ENCODE measurements at regions of chr2 and their contacts with region 1.

Region 1: GRCh38 chr2:174748948-174749347 is 15.3 kb downstream of the CHRNA1 start:
- DNase-seq: peak; percentile 92
- H3K4me3 Mint-ChIP-seq: no peak overlapping the region
- H3K27ac Mint-ChIP-seq: peak overlapping the region; percentile 49
- H3K4me1 Mint-ChIP-seq: peaks cover 31% of the 10 kb centered on the region
- H3K27me3 Mint-ChIP-seq: peaks cover 16% of the 10 kb centered on the region

Region 2: DNA sequence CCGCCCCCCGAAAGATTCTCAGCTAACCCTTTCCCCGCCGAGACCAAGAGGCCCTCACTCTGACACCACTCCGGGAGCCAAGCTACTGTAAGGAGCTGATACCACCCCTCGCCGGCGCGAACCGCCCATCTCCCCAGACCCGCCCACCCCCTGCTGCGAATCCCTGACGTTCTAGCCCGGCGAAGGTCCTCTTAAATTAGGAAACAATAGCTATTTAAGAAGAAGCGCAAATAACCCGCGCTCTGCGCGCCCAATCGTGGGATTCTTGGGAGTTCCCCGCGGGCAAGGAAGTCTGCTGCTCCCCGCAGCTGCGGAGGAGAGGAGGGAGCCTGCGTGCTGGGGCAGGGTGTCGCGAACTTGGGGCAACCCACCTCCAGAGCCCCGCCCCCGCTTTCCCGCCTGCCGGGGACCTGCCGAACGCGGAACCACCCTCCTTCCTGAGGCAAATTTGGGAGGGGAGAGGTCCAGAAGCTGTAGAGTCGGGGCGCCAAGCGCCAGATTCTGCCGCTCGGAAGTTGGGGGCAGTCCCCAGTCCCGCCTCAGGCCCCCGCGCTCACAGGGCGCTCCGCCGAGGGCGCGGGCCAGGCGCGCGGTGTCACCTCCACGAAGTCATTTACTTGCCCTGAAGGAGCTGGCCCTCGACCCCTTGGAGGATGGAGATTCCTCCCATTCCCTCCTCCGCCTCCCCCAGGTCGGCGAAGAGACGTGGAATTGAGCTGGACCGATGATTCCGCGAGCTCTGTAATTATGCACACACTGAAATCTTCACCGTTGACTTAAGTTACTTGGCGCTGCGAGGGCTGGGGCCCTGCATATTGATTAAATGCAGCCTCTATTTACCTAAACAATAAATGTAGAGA is 422.6 kb before region 1 on chr2:
- intact Hi-C with region 1: no loop called
- DNase-seq: peak; percentile 76
- H3K4me3 Mint-ChIP-seq: peak overlapping the region; percentile 80
- H3K27ac Mint-ChIP-seq: no peak overlapping the region
- H3K4me1 Mint-ChIP-seq: peaks cover 16% of the 10 kb centered on the region
- H3K27me3 Mint-ChIP-seq: peaks cover 86% of the 10 kb centered on the region

Region 3: GRCh38 chr2:174593574-174594203 is 155.3 kb before region 1 on chr2:
- intact Hi-C with region 1: loop called (anchors 2 kb)
- DNase-seq: peak; percentile 92
- H3K4me3 Mint-ChIP-seq: peak overlapping the region; percentile 86
- H3K27ac Mint-ChIP-seq: peak overlapping the region; percentile 98
- H3K4me1 Mint-ChIP-seq: peaks cover 53% of the 10 kb centered on the region
- H3K27me3 Mint-ChIP-seq: no peaks in the 10 kb centered on the region

Region 4: DNA sequence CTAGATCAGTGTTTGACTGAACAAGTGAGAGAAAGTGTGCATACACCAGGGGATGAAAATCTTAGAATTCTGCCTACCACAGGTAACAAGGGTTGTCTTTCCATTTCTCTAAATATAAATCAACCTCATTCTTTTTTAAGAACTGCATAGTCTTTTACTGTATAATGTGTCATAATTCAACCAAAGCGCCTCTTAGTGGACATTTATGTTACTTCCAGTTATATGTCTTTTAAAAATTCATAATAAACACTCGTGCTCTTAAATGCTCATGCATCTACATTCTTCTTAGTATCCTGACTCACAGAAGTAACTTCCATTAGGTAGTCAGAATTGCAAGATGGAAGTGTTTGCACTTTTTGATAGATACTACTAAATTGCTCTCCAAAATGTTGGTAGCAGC is 60.9 kb before region 1 on chr2:
- intact Hi-C with region 1: no loop called
- DNase-seq: no peak
- H3K4me3 Mint-ChIP-seq: no peak overlapping the region
- H3K27ac Mint-ChIP-seq: no peak overlapping the region
- H3K4me1 Mint-ChIP-seq: peaks cover 30% of the 10 kb centered on the region
- H3K27me3 Mint-ChIP-seq: no peaks in the 10 kb centered on the region

Region 5: DNA sequence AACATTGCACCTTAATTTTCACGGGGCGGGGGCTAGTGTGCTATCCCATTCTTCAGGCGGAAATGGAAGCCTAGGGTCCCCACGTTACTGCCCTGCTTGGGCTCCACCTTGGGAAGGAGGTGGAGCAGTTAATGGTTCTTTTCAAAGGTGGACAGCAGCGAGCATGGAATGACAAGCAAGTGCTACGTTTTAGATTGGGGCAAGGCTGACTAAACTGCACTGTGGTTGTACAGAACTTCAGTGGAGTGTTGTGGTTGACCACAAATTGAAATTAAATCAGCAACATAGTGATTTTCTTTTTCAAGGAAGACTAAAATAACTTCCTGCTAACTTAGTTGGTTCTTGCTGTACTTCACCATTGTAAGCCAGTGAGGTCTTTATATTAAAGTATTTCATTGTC is 31.7 kb before region 1 on chr2:
- intact Hi-C with region 1: loop called (anchors 2 kb)
- DNase-seq: peak; percentile 82
- H3K4me3 Mint-ChIP-seq: peak overlapping the region; percentile 63
- H3K27ac Mint-ChIP-seq: peak overlapping the region; percentile 39
- H3K4me1 Mint-ChIP-seq: peaks cover 27% of the 10 kb centered on the region
- H3K27me3 Mint-ChIP-seq: peaks cover 12% of the 10 kb centered on the region

Region 6: DNA sequence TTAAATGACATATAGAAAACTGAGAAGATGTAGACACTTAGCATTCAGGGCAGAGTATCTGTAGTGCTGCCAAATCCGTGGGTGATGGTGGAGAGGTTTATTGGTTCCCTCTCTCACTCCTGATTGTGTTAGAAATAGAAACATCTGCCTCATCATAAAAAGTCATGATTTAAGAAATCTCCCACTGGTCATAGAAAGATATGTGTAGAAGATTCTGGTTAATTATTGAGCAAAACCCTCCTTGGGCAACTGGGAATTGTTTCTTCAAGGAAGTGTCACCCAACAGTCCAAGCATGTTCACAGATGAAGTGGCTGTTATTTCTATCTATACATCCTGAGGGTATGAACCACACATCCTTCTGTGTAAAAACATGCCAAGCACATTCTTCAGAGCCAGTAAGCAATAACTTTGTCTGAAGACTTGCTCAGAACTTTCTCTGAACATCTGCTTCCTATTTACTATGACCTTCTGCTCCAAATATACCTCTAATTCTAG is 48.9 kb after region 1 on chr2:
- intact Hi-C with region 1: loop called (anchors 1 kb)
- DNase-seq: no peak
- H3K4me3 Mint-ChIP-seq: no peak overlapping the region
- H3K27ac Mint-ChIP-seq: no peak overlapping the region
- H3K4me1 Mint-ChIP-seq: peaks cover 19% of the 10 kb centered on the region
- H3K27me3 Mint-ChIP-seq: no peaks in the 10 kb centered on the region

Region 7: DNA sequence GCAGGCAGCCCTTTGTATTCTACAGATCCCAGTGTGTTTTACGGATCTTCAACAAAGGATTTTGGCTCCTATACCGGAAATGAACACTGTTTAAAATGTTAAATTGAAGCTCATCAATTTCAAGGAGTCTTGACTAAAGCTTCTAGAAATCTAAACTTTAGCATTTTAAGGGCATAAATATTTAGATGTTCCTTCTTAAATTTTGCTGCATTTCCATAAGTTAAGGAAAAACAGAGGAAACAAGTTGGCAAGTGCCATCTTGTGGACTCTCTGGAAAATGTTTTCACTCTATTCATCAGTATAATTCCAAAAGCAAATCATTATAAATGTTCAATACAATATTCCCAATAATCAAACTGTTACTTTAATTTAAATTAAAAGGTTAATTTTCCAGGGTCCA is 236.7 kb after region 1 on chr2:
- intact Hi-C with region 1: loop called (anchors 2 kb)
- DNase-seq: no peak
- H3K4me3 Mint-ChIP-seq: no peak overlapping the region
- H3K27ac Mint-ChIP-seq: no peak overlapping the region
- H3K4me1 Mint-ChIP-seq: peaks cover 2% of the 10 kb centered on the region
- H3K27me3 Mint-ChIP-seq: peaks cover 19% of the 10 kb centered on the region

Region 8: GRCh38 chr2:175167792-175168563 is 419.0 kb after region 1 on chr2 and contains the start of gene ATF2:
- intact Hi-C with region 1: loop called (anchors 5 kb)
- DNase-seq: peak; percentile 99
- H3K4me3 Mint-ChIP-seq: peak within 1 kb of the TSS; percentile 100
- H3K27ac Mint-ChIP-seq: peak within 1 kb of the TSS; percentile 100
- H3K4me1 Mint-ChIP-seq: peaks cover 33% of the 10 kb centered on the region
- H3K27me3 Mint-ChIP-seq: no peaks in the 10 kb centered on the region
- total RNA-seq, gene ATF2: 58.8 and 60.2 TPM in 2 replicates

Measured in activated CD4-positive, alpha-beta T cell treated with anti-CD3 and anti-CD28 coated beads, Interleukin-2, amount 10 ng/mL, durations not matched to agents 24 days and 14 days (primary cell).